ENCODE measurements at regions of chr4 and their contacts with region 1.

Region 1: DNA sequence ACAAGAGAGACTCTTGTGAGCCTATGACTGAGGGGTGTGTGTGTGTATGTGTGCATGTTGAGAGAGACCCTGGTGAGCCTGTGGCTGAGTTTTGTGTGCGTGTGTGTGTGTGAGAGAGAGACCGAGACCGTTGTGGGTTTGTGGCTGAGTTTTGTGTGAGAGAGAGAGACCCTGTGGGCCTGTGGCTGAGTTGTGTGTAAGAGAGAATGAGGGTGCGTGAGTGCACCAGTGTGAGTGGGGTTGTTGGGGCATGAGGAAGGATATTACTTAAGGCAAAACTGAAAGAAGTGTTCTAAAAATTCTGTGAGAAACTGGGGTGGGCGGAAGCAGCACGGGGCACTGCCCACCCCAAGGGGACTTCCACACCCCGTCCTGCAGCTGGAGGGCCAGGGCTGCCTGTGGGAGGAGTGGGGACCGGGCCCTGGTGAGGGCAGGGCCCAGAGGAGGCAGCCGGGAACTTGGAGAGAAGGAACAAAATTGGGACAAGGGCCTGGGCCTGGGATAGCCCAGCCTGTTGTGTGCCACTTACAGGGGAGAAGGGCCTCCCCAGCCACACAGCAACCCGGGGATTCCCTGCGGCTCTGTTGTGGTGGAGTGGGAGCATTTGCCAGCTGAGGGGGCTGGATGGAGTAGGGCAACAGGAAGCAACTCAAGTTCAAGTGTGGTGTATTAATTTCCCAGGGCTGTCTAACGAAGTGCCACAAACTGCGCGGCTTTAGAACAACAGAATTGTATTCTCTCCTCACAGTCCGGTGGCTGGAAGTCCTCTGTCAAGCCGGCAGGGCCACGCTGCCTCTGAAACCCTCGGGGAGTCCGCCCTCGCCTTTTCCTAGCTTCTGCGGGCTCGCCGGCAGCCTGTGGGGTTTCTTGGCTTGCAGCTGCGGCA is 22.1 kb downstream of the TMEM131L start:
- DNase-seq: peak; percentile 72 to 92
- ATAC-seq: peak; percentile 68 to 85 (median 75)
- H3K4me3 ChIP-seq: peak overlapping the region; percentile 36
- H3K4me3 Mint-ChIP-seq: peak overlapping the region; percentile 77
- H3K27ac ChIP-seq: peak overlapping the region; percentile 95
- H3K27ac Mint-ChIP-seq: peak overlapping the region; percentile 89 to 95
- H3K4me1 ChIP-seq: peaks cover 62% of the 10 kb centered on the region
- H3K4me1 Mint-ChIP-seq: peaks cover 67 to 77% of the 10 kb centered on the region in 2 donors
- H3K27me3 ChIP-seq: no peaks in the 10 kb centered on the region
- H3K27me3 Mint-ChIP-seq: peaks cover 0 to 5% of the 10 kb centered on the region in 2 donors
- CTCF ChIP-seq: no peak

Region 2: DNA sequence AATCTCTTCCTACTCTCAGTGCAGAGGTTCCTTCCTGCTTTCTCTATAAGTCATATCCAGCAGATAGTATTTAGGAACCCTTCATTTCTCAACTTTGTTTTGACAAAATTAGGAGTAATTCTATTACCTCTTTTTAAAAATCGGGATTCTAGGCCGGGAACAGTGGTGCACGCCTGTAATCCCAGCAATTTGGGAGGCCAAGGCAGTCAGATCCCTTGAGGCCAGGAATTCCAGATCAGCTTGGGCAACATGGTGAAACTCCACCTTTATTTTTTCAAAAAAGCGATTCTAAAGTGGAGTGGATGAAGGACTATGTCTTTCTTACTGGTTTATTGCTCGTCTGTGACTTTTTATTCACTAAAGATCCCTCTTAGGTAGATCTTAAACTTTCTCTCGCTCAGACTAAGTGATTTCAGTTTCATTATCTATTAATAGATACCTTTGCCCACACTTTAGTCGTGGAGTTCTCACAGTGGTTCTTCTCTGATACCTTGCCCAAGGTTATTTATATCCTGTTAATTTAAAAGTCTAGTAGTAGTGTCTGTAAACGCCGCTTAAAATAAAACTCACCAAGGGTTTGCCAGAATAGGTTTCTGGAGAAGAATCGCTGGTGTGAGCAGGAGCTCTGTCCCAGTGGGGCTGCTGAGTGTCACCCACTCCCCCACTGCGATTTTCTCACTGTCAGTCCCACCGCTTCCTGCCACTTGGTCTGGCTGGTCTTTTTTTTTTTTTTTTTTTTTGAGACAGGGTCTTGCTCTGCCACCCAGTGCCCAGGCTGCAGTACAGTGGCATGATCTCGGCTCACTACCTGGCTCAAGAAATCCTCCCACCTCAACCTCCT is 49.1 kb before region 1 on chr4:
- intact Hi-C with region 1: loop called (anchors 2 kb)
- DNase-seq: peak; percentile 38 to 66
- ATAC-seq: peak; percentile 86 to 92 (median 87)
- H3K4me3 ChIP-seq: peak overlapping the region; percentile 51
- H3K4me3 Mint-ChIP-seq: peak overlapping the region; percentile 89
- H3K27ac ChIP-seq: peak overlapping the region; percentile 98
- H3K27ac Mint-ChIP-seq: peak overlapping the region; percentile 90 to 92
- H3K4me1 ChIP-seq: peaks cover 30% of the 10 kb centered on the region
- H3K4me1 Mint-ChIP-seq: peaks cover 19 to 20% of the 10 kb centered on the region in 2 donors
- H3K27me3 ChIP-seq: no peaks in the 10 kb centered on the region
- H3K27me3 Mint-ChIP-seq: no peaks in the 10 kb centered on the region
- CTCF ChIP-seq: no peak

Region 3: GRCh38 chr4:153466081-153466948 is 21.9 kb before region 1 on chr4 and contains the start of gene TMEM131L:
- intact Hi-C with region 1: loop called (anchors 1 kb)
- DNase-seq: peak; percentile 47 to 92
- ATAC-seq: peak; percentile 71 to 88 (median 84)
- H3K4me3 ChIP-seq: peak within 1 kb of the TSS; percentile 68
- H3K4me3 Mint-ChIP-seq: peak within 1 kb of the TSS; percentile 96
- H3K27ac ChIP-seq: peak within 1 kb of the TSS; percentile 76
- H3K27ac Mint-ChIP-seq: peak within 1 kb of the TSS; percentile 96 to 98
- H3K4me1 ChIP-seq: peaks cover 34% of the 10 kb centered on the region
- H3K4me1 Mint-ChIP-seq: peaks cover 55 to 56% of the 10 kb centered on the region in 2 donors
- H3K27me3 ChIP-seq: no peaks in the 10 kb centered on the region
- H3K27me3 Mint-ChIP-seq: no peaks in the 10 kb centered on the region
- CTCF ChIP-seq: no peak
- total RNA-seq, gene TMEM131L: 67.8 to 105 (median 71.1) TPM

Region 4: GRCh38 chr4:153471691-153472080 is 16.6 kb before region 1 on chr4:
- intact Hi-C with region 1: loop called (anchors 1 kb)
- DNase-seq: peak; percentile 33 to 76
- ATAC-seq: peak; percentile 66 to 73 (median 67)
- H3K4me3 ChIP-seq: peak overlapping the region; percentile 15
- H3K4me3 Mint-ChIP-seq: peak overlapping the region; percentile 82
- H3K27ac ChIP-seq: peak overlapping the region; percentile 81
- H3K27ac Mint-ChIP-seq: peak overlapping the region; percentile 96 to 98
- H3K4me1 ChIP-seq: peaks cover 44% of the 10 kb centered on the region
- H3K4me1 Mint-ChIP-seq: peaks cover 70 to 84% of the 10 kb centered on the region in 2 donors
- H3K27me3 ChIP-seq: no peaks in the 10 kb centered on the region
- H3K27me3 Mint-ChIP-seq: no peaks in the 10 kb centered on the region
- CTCF ChIP-seq: no peak

Region 5: DNA sequence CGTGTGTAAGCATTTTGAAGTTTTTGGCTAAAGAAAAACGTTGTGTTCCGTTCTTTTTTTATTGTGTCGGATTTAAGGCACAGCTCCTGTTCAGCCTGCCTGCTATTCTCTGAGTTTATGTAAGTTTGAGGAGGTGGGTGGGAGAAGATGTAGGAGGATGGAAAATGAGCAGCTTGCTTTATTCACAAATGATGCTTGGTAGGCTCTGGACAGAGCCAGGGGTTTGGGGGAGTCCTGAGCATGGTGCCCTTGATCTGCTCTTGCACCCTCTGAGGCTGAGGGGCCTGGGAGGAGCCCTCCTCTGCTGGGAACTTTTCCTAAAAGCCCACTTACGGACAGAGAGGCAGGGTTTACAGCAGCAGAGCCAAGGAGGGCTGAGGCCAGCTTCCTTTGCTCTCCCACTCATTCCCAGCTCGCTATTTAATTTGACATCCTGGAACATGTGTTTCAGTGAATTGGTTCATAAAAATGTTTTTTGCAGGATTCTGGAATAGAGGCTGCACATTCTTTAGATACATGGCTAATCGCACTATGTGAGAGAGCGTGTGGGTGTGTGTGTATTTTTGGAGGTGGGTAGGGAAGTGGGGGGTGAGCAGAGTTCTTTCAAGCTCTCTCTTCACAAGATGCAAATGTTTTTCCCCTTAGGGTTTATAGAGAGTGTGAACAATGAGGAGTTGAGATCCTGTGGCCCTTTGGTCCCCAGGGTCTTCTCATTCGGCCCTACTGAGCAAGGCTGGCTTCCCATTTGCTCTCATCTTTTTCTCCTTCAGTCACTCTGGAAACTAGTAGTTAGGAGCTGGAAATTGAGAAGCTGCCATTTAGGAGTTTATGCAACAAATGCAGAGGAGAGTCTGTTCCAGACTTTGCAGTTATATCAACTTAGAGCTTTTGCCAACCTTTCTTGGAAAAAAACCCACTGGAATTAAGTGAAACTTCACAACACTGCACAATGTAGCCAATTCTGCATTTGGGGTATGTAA is 10.0 kb after region 1 on chr4:
- intact Hi-C with region 1: loop called (anchors 1 kb)
- DNase-seq: peak in 1 of 2 donors; percentile 55
- ATAC-seq: peak in 2 of 3 donors; percentile 29 to 38
- H3K4me3 ChIP-seq: no peak overlapping the region
- H3K4me3 Mint-ChIP-seq: peak overlapping the region; percentile 53
- H3K27ac ChIP-seq: peak overlapping the region; percentile 79
- H3K27ac Mint-ChIP-seq: peak overlapping the region; percentile 78 to 89
- H3K4me1 ChIP-seq: peaks cover 69% of the 10 kb centered on the region
- H3K4me1 Mint-ChIP-seq: peaks cover 86 to 88% of the 10 kb centered on the region in 2 donors
- H3K27me3 ChIP-seq: no peaks in the 10 kb centered on the region
- H3K27me3 Mint-ChIP-seq: no peaks in the 10 kb centered on the region
- CTCF ChIP-seq: no peak

Region 6: GRCh38 chr4:153521999-153522801 is 34.0 kb after region 1 on chr4:
- intact Hi-C with region 1: loop called (anchors 1 kb)
- DNase-seq: peak; percentile 52 to 86
- ATAC-seq: peak; percentile 40 to 66 (median 60)
- H3K4me3 ChIP-seq: peak overlapping the region; percentile 1
- H3K4me3 Mint-ChIP-seq: peak overlapping the region; percentile 87
- H3K27ac ChIP-seq: peak overlapping the region; percentile 73
- H3K27ac Mint-ChIP-seq: peak overlapping the region; percentile 90 to 92
- H3K4me1 ChIP-seq: peaks cover 77% of the 10 kb centered on the region
- H3K4me1 Mint-ChIP-seq: peaks cover 100% of the 10 kb centered on the region in 2 donors
- H3K27me3 ChIP-seq: no peaks in the 10 kb centered on the region
- H3K27me3 Mint-ChIP-seq: no peaks in the 10 kb centered on the region
- CTCF ChIP-seq: no peak

Region 7: GRCh38 chr4:153573881-153574802 is 85.9 kb after region 1 on chr4:
- intact Hi-C with region 1: loop called (anchors 1 kb)
- DNase-seq: peak; percentile 42 to 82
- ATAC-seq: peak; percentile 86 to 96 (median 95)
- H3K4me3 ChIP-seq: no peak overlapping the region
- H3K4me3 Mint-ChIP-seq: no peak overlapping the region
- H3K27ac ChIP-seq: peak overlapping the region; percentile 44
- H3K27ac Mint-ChIP-seq: peak overlapping the region; percentile 25 to 71
- H3K4me1 ChIP-seq: peaks cover 15% of the 10 kb centered on the region
- H3K4me1 Mint-ChIP-seq: peaks cover 38 to 52% of the 10 kb centered on the region in 2 donors
- H3K27me3 ChIP-seq: no peaks in the 10 kb centered on the region
- H3K27me3 Mint-ChIP-seq: no peaks in the 10 kb centered on the region
- CTCF ChIP-seq: peak; percentile 67

Region 8: GRCh38 chr4:153705743-153706468 is 217.7 kb after region 1 on chr4:
- intact Hi-C with region 1: no loop called
- DNase-seq: no peak
- ATAC-seq: no peak
- H3K4me3 ChIP-seq: no peak overlapping the region
- H3K4me3 Mint-ChIP-seq: no peak overlapping the region
- H3K27ac ChIP-seq: no peak overlapping the region
- H3K27ac Mint-ChIP-seq: no peak overlapping the region
- H3K4me1 ChIP-seq: no peaks in the 10 kb centered on the region
- H3K4me1 Mint-ChIP-seq: peaks cover 8 to 9% of the 10 kb centered on the region in 2 donors
- H3K27me3 ChIP-seq: no peaks in the 10 kb centered on the region
- H3K27me3 Mint-ChIP-seq: peaks cover 0 to 17% of the 10 kb centered on the region in 2 donors
- CTCF ChIP-seq: no peak

Measured in natural killer cell (primary cell).